ENCODE measurements at regions of chr2 and their contacts with region 1.

Region 1: GRCh38 chr2:174797781-174798276 is 33.6 kb upstream of the CHRNA1 start:
- DNase-seq: no peak
- H3K4me3 Mint-ChIP-seq: no peak overlapping the region
- H3K27ac Mint-ChIP-seq: no peak overlapping the region
- H3K4me1 Mint-ChIP-seq: peaks cover 38% of the 10 kb centered on the region
- H3K27me3 Mint-ChIP-seq: no peaks in the 10 kb centered on the region

Region 2: DNA sequence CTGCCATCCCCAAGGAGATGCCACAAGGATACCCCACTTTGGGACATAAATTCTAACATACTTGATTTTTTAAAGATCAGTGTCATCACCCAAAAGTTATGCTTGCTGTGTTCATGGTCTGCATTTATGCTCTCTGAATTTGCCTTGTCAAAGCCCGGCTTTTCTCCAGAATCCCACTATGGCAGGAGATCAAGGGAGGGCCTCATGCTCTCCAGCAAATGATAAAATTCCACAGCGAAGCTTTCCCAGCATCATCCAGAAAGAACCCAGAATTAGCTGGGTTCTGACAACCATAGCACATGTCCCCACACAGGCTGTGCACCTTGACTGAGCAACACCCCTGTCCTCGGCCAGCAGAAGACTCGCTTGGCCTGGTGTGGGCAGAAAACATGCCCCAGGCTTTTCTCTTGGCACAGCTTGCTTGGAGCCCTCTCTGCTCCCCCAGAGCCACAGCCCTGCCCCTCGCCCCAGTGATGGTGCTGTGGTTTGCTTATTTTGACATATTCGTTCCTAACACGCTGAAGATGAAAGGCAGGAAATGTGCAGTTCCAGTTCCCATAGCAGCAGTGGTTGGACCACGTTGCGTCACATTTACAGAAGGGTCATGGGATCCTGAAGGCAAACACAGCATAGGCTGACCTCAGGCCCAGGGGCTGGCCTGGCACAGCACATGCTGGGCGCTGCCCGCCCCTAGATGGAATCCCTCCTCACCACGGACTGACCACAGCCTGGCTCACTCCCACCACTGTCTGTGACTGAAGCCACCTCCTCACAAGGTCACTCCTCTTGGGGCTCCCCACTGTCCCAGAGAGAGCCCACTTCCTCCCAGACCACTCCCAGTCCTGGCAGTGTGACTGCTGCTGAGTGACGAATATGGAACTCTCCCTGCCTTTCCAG is 19.5 kb before region 1 on chr2:
- intact Hi-C with region 1: loop called (anchors 2 kb)
- DNase-seq: peak; percentile 76
- H3K4me3 Mint-ChIP-seq: no peak overlapping the region
- H3K27ac Mint-ChIP-seq: peak overlapping the region; percentile 87
- H3K4me1 Mint-ChIP-seq: peaks cover 39% of the 10 kb centered on the region
- H3K27me3 Mint-ChIP-seq: no peaks in the 10 kb centered on the region

Region 3: GRCh38 chr2:174901075-174901474 is 103.2 kb after region 1 on chr2:
- intact Hi-C with region 1: loop called (anchors 5 kb)
- DNase-seq: no peak
- H3K4me3 Mint-ChIP-seq: peak overlapping the region; percentile 24
- H3K27ac Mint-ChIP-seq: peak overlapping the region; percentile 53
- H3K4me1 Mint-ChIP-seq: peaks cover 20% of the 10 kb centered on the region
- H3K27me3 Mint-ChIP-seq: peaks cover 1% of the 10 kb centered on the region

Measured in activated T-helper 2 cell treated with anti-CD3 and anti-CD28 coated beads, Interferon-gamma antibody, Interleukin-2, Interleukin-4, amounts not matched to agents 10 μg/mL and 5 μg/mL and 100 μg/mL, durations not matched to agents 14 hours and 24 hours and 36 hours (primary cell).